MCF 10A (cell line): ENCODE measurements at regions of chr2 and their contacts with region 1.

Region 1: GRCh38 chr2:237092920-237093781 is 7.5 kb downstream of the COPS8 start:
- DNase-seq: peak; percentile 86
- H3K4me3 Mint-ChIP-seq: peak overlapping the region; percentile 99
- H3K27ac Mint-ChIP-seq: peak overlapping the region; percentile 94
- H3K4me1 Mint-ChIP-seq: peaks cover 62% of the 10 kb centered on the region
- H3K27me3 Mint-ChIP-seq: no peaks in the 10 kb centered on the region
- CTCF ChIP-seq: peak; percentile 72

Region 2: GRCh38 chr2:236776695-236777251 is 316.4 kb before region 1 on chr2:
- CTCF ChIA-PET with region 1: no interaction called
- POLR2A ChIA-PET with region 1: no interaction called
- intact Hi-C with region 1: no loop called
- DNase-seq: peak; percentile 89
- H3K4me3 Mint-ChIP-seq: no peak overlapping the region
- H3K27ac Mint-ChIP-seq: peak overlapping the region; percentile 88
- H3K4me1 Mint-ChIP-seq: peaks cover 7% of the 10 kb centered on the region
- H3K27me3 Mint-ChIP-seq: no peaks in the 10 kb centered on the region
- CTCF ChIP-seq: no peak

Region 3: GRCh38 chr2:236988690-236989624 is 104.2 kb before region 1 on chr2:
- CTCF ChIA-PET with region 1: no interaction called
- POLR2A ChIA-PET with region 1: no interaction called
- intact Hi-C with region 1: no loop called
- DNase-seq: no peak
- H3K4me3 Mint-ChIP-seq: no peak overlapping the region
- H3K27ac Mint-ChIP-seq: no peak overlapping the region
- H3K4me1 Mint-ChIP-seq: no peaks in the 10 kb centered on the region
- H3K27me3 Mint-ChIP-seq: peaks cover 20% of the 10 kb centered on the region
- CTCF ChIP-seq: no peak

Region 4: DNA sequence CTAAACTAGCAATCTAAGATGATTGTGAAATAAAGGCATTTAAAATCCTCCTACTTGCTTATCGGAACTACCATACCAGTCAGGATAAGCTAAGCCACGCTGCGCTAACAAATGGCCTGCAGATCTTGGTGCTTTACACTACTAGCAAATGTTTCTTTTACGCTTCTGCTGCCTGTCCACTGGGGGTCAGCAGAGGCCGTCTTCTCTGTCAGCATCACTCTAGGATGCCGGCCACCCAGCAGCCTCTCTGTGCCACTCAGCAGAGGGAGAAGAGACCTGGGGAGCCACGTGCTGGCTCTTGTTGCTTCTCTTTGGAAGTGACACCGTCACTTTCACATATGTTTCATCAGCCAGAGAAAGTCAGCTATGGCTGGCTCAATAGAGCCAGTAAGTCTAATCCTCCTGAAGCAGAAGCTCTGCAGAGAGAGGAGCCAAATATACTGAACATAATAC is 29.1 kb after region 1 on chr2:
- CTCF ChIA-PET with region 1: interaction called, 4 read pairs
- POLR2A ChIA-PET with region 1: interaction called, 21 read pairs
- intact Hi-C with region 1: no loop called
- DNase-seq: peak; percentile 82
- H3K4me3 Mint-ChIP-seq: no peak overlapping the region
- H3K27ac Mint-ChIP-seq: peak overlapping the region; percentile 82
- H3K4me1 Mint-ChIP-seq: peaks cover 25% of the 10 kb centered on the region
- H3K27me3 Mint-ChIP-seq: no peaks in the 10 kb centered on the region
- CTCF ChIP-seq: peak; percentile 80

Region 5: GRCh38 chr2:237141556-237141955 is 48.4 kb after region 1 on chr2:
- CTCF ChIA-PET with region 1: interaction called, 3 read pairs
- POLR2A ChIA-PET with region 1: interaction called, 9 read pairs
- intact Hi-C with region 1: loop called (anchors 5 kb)
- DNase-seq: peak; percentile 94
- H3K4me3 Mint-ChIP-seq: peak overlapping the region; percentile 3
- H3K27ac Mint-ChIP-seq: peak overlapping the region; percentile 85
- H3K4me1 Mint-ChIP-seq: peaks cover 28% of the 10 kb centered on the region
- H3K27me3 Mint-ChIP-seq: no peaks in the 10 kb centered on the region
- CTCF ChIP-seq: no peak

Region 6: DNA sequence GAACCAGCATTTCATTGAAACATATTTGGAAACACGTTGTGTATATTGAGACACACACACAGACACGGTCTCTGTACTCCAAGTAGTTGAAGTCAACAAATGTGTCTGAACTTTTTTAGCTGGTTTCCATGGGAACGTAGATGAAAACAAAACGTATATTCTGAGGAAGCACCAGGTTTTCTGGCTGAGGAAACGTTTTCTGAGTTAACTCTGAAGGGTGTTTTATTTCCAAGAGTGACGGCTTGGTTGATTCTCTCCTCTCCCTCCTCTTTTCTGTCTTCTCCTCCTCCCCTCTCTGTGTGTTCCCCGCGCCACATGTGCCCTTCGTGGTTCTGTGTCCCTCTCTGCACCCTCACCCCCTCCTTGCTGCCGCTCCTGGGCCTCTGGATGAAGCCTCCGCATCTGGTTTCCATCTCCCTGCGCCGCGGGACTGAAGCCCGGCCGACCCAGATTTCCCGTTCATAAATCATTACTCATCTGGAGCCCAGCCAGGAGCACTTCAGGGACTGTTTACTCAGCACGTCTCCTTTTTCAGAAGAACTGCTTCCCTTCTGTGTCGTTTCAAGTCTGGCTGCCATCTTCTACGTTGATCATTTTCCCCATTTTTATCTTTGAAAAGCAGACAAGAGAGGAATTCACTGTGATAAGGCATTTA is 198.1 kb after region 1 on chr2:
- CTCF ChIA-PET with region 1: interaction called, 3 read pairs
- POLR2A ChIA-PET with region 1: interaction called, 12 read pairs
- intact Hi-C with region 1: loop called (anchors 10 kb)
- DNase-seq: peak; percentile 98
- H3K4me3 Mint-ChIP-seq: peak overlapping the region; percentile 63
- H3K27ac Mint-ChIP-seq: peak overlapping the region; percentile 99
- H3K4me1 Mint-ChIP-seq: peaks cover 40% of the 10 kb centered on the region
- H3K27me3 Mint-ChIP-seq: no peaks in the 10 kb centered on the region
- CTCF ChIP-seq: no peak

Region 7: GRCh38 chr2:237413777-237414661 is 320.9 kb after region 1 on chr2 and contains the start of gene COL6A3:
- CTCF ChIA-PET with region 1: interaction called, 6 read pairs
- POLR2A ChIA-PET with region 1: interaction called, 4 read pairs
- intact Hi-C with region 1: loop called (anchors 1 kb)
- DNase-seq: no peak
- H3K4me3 Mint-ChIP-seq: no peak within 1 kb of the TSS
- H3K27ac Mint-ChIP-seq: no peak within 1 kb of the TSS
- H3K4me1 Mint-ChIP-seq: no peaks in the 10 kb centered on the region
- H3K27me3 Mint-ChIP-seq: no peaks in the 10 kb centered on the region
- CTCF ChIP-seq: no peak
- total RNA-seq, gene COL6A3: 0.19 and 0.61 TPM in 2 replicates